ENCODE measurements at regions of chr14 and their contacts with region 1.

Region 1: DNA sequence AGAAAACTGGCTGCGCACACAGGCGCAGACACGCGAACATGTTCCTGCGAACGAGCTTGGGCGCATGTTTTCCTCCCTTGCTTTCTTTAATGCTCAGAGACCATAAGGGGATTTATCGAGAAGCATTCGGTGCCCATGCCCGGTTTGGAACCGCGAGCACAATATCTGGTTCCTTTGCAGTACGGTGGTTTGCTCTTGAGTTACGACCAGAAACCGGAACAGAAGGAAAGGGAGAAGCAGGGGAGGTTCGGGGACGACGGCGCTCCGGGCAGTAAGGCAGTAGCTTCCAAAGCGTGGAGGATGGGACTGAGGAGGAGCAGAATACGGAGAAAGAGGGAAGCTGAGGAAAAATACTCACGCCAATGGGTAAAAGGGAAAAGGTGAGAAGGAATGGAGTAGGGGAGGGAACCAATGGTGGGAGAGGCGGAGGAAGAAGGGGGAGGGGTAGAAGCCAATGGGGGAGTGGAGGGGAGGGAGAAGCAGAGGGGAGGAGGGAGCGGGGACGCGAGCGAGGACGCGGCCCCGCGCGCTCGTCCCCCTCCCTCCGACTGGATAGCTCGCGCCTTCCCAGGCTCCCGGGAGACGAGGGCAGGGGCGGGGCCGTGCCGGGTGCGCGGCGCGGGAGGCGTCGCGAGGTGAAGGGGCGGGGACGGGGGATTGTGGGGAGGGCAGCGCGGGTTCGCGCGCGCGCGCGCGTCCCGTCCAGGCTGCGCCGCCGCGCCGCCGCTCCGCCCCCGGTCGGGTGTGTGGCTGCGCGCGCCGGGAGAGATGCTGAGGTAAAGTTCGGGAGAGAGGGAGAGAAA is 625 bp upstream of the ARHGAP5 start:
- H3K4me3 Mint-ChIP-seq: peak overlapping the region; percentile 84
- H3K27ac Mint-ChIP-seq: peak overlapping the region; percentile 85
- H3K4me1 Mint-ChIP-seq: peaks cover 28% of the 10 kb centered on the region
- H3K27me3 Mint-ChIP-seq: peaks cover 31% of the 10 kb centered on the region

Region 2: GRCh38 chr14:31420319-31421111 is 656.0 kb before region 1 on chr14 and contains the start of gene HEATR5A:
- intact Hi-C with region 1: loop called (anchors 5 kb)
- H3K4me3 Mint-ChIP-seq: peak within 1 kb of the TSS; percentile 97
- H3K27ac Mint-ChIP-seq: peak within 1 kb of the TSS; percentile 94
- H3K4me1 Mint-ChIP-seq: peaks cover 32% of the 10 kb centered on the region
- H3K27me3 Mint-ChIP-seq: no peaks in the 10 kb centered on the region

Region 3: GRCh38 chr14:31510222-31510621 is 566.3 kb before region 1 on chr14:
- intact Hi-C with region 1: loop called (anchors 5 kb)
- H3K4me3 Mint-ChIP-seq: no peak overlapping the region
- H3K27ac Mint-ChIP-seq: no peak overlapping the region
- H3K4me1 Mint-ChIP-seq: no peaks in the 10 kb centered on the region
- H3K27me3 Mint-ChIP-seq: peaks cover 12% of the 10 kb centered on the region

Region 4: DNA sequence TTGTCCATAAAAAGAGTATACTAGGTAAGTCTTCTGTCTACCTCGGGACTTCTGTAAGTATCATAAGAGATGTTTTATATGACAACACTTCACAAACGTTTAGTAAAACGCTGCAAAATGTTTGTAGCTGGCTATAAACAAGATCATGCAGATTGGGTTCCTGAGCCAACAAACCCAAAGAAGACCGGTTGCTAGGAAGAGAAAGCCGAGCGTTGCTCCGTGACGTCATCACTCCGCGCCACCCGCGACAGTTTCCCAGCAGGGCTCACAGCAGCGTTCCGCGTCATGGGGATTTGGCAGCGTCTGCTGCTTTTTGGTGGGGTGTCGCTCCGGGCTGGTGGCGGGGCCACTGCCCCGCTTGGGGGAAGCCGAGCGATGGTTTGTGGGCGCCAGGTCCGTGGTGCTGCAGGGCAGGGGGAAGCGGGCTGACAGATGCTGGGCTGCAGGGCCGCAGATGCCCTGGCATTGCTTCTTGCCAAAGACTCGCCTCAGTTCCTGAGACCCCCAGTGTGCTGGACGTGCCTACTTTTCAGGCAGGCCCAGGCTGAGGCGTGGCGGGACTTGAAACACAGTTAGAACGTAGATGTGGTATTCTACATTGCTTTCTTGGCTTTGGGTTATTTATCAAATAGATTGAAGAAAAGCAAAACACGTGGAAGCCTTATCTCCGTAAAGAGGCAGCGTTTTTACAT is 515.2 kb before region 1 on chr14 and contains the start of gene NUBPL:
- intact Hi-C with region 1: loop called (anchors 5 kb)
- H3K4me3 Mint-ChIP-seq: peak within 1 kb of the TSS; percentile 97
- H3K27ac Mint-ChIP-seq: peak within 1 kb of the TSS; percentile 94
- H3K4me1 Mint-ChIP-seq: peaks cover 17% of the 10 kb centered on the region
- H3K27me3 Mint-ChIP-seq: peaks cover 6% of the 10 kb centered on the region

Region 5: GRCh38 chr14:32202998-32203882 is 126.8 kb after region 1 on chr14 and contains the start of gene RNU6-8:
- intact Hi-C with region 1: loop called (anchors 5 kb)
- H3K4me3 Mint-ChIP-seq: peak within 1 kb of the TSS; percentile 51
- H3K27ac Mint-ChIP-seq: no peak within 1 kb of the TSS
- H3K4me1 Mint-ChIP-seq: peaks cover 44% of the 10 kb centered on the region
- H3K27me3 Mint-ChIP-seq: peaks cover 60% of the 10 kb centered on the region

Region 6: DNA sequence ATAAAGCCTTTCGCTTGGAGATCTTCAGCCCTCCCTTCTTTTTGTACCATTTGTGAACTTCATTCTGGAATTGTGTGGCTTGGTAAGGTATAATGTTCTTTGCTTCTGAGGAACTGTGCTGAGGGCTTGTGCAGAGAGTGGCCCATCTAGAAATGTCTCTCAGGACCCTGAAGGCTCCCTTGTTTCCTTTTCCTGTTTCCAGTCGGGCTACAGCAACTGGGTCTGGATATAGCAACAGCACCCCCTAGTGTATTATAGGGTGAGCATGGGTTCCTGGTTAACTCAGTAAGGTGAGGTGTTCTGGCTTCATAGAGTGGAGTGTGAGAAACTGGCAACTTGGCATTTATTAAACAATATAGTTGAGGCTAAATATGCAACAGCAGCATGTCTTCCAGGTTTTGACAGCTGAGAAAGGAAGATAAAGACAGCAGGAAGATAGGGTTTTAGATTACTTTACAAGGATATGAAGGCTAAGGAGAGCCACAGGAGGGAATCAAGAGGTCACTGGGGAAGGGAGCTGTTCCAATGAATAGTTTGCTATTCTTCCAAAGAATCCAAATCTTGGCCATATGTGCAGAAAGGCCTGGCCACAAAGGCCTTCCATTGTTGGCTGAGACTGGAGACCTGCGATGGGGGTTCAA is 175.7 kb after region 1 on chr14:
- intact Hi-C with region 1: loop called (anchors 1 kb)
- H3K4me3 Mint-ChIP-seq: no peak overlapping the region
- H3K27ac Mint-ChIP-seq: no peak overlapping the region
- H3K4me1 Mint-ChIP-seq: no peaks in the 10 kb centered on the region
- H3K27me3 Mint-ChIP-seq: peaks cover 3% of the 10 kb centered on the region